ENCODE measurements at regions of chr18 and their contacts with region 1.

Region 1: GRCh38 chr18:79395761-79396387 is at the start of gene NFATC1:
- DNase-seq: peak; percentile 89
- ATAC-seq: peak; percentile 56
- total RNA-seq, gene NFATC1: 19.8 TPM

Region 2: DNA sequence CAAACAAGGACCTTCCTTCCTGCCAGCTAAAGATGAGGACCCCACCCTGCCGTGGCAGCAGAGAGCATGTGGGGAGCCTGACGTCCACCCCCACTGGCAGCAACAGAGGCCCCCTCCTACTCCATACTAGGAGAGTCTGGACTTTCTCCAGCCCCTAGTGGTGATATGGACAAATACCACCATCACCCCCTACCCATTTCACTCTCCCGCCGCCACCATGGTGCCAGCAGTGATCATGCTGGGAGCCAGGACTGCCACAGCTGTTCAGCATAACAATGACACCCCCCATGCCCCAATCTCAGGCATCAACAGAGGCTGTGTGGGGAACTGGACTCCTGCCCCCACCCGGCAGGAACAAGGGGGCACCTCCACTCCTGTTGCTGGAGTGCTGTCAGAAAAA is 369.4 kb before region 1 on chr18:
- intact Hi-C with region 1: no loop called
- DNase-seq: no peak
- ATAC-seq: no peak

Region 3: GRCh38 chr18:79458131-79458838 is 62.4 kb after region 1 on chr18:
- intact Hi-C with region 1: loop called (anchors 10 kb)
- DNase-seq: peak; percentile 82
- ATAC-seq: peak; percentile 87

Region 4: GRCh38 chr18:79507076-79507545 is 111.2 kb after region 1 on chr18:
- intact Hi-C with region 1: loop called (anchors 5 kb)
- DNase-seq: peak; percentile 88
- ATAC-seq: peak; percentile 92

Measured in Right ventricle myocardium superior (tissue), 1 donor.